Left cardiac atrium (tissue), 4 donors: ENCODE measurements at regions of chr17 and their contacts with region 1.

Region 1: GRCh38 chr17:44110823-44111633 is 12.4 kb downstream of the HDAC5 start:
- DNase-seq: peak; percentile 98
- ATAC-seq: peak; percentile 88

Region 2: DNA sequence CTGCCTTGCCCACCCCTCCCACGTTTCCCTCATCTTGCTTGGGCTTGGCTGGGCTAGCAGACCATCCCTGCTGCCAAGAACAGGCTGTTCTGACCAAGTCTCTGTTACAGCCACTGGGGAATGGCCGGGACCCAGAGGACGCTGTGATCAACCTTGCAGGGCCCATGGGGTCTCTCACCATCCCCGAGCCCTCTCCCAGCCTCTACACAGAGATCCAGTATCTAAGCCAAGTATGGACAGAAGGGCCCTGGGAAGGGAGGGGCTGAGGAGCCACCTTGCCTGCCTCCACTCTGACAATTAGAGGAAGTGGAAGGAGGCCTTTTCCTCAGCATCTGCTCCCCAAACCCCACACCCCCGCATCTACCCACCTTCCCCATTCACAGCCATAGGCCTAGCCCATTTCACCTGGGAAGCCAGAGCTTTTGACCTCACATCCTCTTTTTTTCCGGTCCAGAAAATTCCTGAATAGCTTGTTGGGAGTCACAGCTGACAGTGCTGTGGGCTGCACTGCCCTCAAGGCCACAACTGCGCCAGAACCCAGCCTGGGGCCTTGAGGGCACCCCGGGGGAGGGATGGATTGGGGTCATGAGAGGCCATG is 249.9 kb before region 1 on chr17:
- intact Hi-C with region 1: no loop called
- DNase-seq: peak; percentile 57
- ATAC-seq: peak; percentile 72 to 73

Region 3: GRCh38 chr17:43940630-43941029 is 170.4 kb before region 1 on chr17:
- intact Hi-C with region 1: loop called in 1 of 2 experiments (anchors 5 kb)
- DNase-seq: no peak
- ATAC-seq: peak in 1 of 2 donors; percentile 13

Region 4: DNA sequence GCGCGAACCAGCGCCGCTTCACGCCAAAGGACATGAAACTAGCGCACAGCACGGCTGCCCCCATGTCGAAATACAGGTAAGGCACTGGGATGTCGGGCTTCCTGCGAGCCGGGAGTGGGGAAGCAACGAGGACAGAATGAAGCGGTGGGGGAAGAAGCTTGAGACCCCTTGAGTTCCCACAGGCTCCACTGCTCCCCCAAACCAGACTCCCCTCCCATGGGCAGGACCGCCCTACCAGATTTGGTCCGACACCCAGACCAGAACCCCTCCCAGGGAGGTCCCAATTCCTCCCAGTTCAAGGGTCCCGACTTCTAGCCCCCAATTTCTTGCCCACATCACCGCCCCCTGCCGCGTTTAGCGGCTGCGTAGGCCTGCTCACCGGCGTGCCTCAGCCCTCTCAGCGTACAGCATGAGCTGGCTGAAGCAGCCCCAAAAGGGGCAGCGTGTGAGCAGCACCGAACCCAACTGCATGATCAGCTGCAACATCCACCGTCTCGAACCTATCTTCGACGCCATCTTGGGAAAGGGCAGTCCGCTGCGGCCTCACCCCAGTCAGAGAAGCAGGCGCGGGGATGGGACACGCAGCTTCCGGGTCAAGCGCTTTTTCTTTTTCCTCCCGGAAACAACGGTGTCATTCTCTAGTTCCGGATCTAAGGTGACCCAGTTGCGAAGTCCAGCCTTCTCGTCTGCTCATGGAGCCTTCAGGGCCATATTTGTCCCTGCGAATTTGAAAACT is 96.4 kb before region 1 on chr17 and contains the start of gene TMEM101:
- intact Hi-C with region 1: loop called in 1 of 2 experiments (anchors 5 kb)
- DNase-seq: peak; percentile 92
- ATAC-seq: peak; percentile 94 to 96
- total RNA-seq, gene TMEM101: 16.1 to 17.5 TPM

Region 5: DNA sequence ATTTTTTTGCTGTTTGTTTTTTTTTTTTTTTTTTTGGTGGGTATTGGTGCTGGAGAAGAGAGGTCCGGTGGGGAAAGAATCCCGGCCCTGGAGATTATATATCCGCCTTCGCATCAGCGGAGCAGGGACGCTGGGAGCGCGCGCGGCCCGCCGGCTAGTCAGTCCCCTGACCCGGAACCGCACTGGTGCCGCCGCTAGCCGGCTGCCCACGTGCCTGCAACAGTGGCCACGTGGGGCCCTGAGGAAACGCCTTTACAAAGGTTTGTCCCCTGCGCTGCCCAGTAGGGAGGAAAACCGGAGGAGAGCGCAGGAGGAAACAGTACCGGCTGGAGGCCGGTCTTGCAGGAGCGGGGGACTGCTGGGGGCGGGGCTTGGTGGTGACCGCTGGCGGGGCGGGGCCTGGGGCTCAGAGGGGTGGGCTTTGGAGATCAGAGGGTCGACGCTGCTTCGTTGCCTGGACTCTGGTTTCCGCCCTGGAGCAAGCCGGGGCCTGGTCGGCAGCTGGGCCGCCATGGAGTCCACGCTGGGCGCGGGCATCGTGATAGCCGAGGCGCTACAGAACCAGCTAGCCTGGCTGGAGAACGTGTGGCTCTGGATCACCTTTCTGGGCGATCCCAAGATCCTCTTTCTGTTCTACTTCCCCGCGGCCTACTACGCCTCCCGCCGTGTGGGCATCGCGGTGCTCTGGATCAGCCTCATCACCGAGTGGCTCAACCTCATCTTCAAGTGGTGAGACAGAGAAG is 40.4 kb before region 1 on chr17 and contains the start of gene G6PC3:
- intact Hi-C with region 1: loop called in 1 of 2 experiments (anchors 5 kb)
- DNase-seq: peak; percentile 97
- ATAC-seq: peak; percentile 94
- total RNA-seq, gene G6PC3: 32.9 to 44.4 TPM